ENCODE measurements at regions of chr13 and their contacts with region 1.

Region 1: DNA sequence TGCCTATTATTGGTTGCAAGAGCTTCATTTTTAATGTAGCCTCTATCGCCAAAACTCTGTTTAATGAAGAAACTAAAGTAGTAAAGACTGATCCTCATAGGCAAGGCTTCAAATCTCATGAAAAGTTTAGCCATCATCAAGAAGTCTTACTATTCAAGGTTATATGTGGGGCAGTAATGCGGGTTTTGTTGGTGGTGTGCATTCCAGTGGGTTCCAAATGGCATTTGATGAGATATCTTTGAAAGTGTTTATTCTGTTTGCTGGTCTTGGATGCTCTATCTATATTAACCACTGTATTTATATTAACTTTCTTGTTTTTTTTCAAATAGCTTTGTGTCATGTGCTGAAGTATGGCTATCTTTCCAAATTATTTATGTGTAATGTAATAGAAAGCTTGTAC is 72.2 kb downstream of the SERTM1 start:
- DNase-seq: no peak
- ATAC-seq: no peak
- H3K4me3 ChIP-seq: no peak overlapping the region
- H3K27ac ChIP-seq: no peak overlapping the region
- H3K4me1 ChIP-seq: no peaks in the 10 kb centered on the region
- H3K27me3 ChIP-seq: no peaks in the 10 kb centered on the region
- CTCF ChIP-seq: no peak
- POLR2A ChIP-seq: no peak

Region 2: DNA sequence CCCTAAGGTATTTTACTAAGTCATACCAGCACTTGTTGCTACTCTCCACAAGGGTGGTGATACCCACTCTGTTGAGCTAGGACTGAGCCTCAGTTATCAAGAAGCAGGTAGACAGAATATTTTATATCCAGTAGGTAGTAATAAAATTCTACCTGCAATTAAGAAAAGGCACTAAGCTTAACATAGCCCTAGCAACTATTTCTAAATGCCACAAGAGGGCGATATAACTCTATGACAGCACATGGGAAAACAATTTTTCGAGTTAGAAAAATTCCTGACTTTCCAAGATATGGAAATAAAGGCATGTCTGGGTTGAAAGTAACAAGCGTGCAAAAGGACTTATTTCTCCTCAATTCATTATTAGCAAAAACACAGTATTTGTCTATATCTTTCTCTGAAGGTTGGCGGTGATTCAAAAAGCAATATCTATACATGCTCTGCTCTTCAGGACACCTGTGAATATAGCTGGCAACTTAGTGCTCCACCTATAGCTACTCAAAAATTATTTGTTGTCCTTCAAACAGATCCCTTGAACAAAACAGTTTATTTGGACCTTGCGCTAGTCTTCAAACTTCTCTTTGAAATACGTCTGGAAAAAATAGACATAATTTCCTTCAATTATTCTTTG is 463.1 kb before region 1 on chr13:
- in situ Hi-C with region 1: loop called in 2 of 4 experiments (anchors 10 to 25 kb)
- intact Hi-C with region 1: no loop called
- DNase-seq: no peak
- ATAC-seq: no peak
- H3K4me3 ChIP-seq: no peak overlapping the region
- H3K27ac ChIP-seq: no peak overlapping the region
- H3K4me1 ChIP-seq: no peaks in the 10 kb centered on the region
- H3K27me3 ChIP-seq: no peaks in the 10 kb centered on the region
- CTCF ChIP-seq: peak; percentile 36 to 79 (median 74)
- POLR2A ChIP-seq: no peak

Measured in gastrocnemius medialis (tissue), 4 donors.